Mammary epithelial cell (primary cell): ENCODE measurements at regions of chr21 and their contacts with region 1.

Region 1: DNA sequence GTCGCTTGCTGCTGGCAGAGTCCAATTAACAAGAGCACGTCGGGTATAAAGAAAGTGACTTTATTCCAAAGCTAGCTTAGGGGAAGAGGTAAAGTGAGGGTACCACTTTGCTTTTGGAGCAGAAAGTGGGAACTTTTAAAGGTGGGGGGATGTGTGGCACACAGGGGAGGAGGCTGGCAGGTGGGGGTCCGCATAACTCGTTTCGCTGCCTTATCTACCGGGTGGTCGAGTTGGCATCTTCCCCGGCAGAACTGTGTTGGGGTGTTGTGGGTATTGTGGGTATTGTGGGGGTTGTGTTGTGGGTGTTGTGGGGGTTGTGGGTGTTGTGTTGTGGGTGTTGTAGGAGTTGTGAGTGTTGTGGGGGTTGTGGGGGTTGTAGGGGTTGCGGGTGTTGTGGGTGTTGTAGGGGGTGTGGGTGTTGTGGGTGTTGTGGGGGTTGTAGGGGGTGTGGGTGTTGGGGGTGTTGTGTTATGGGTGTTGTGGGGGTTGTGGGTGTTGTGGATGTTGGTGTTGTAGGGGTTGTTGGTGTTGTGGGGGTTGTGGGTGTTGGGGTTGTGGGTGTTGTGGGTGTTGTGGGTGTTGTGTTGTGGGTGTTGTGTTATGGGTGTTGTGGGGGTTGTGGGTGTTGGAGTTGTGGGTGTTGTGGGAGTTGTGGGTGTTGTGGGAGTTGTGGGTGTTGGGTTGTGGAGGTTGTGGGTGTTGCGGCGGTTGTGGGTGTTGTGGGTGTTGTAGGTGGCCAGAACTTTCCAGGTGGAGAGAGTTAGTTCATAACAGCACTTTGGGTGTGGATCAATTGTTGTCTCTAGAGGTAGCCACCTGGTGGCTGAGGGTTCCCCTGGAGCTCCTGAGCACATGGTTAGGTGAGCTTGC is 52.7 kb downstream of the AGPAT3 start:
- DNase-seq: peak; percentile 26
- H3K4me3 ChIP-seq: peak overlapping the region in 2 of 3 experiments; percentile 43 to 48
- H3K27ac ChIP-seq: no peak overlapping the region
- H3K4me1 ChIP-seq: peaks cover 4% of the 10 kb centered on the region
- H3K27me3 ChIP-seq: no peaks in the 10 kb centered on the region
- CTCF ChIP-seq: peak in 1 of 2 donors; percentile 47

Region 2: DNA sequence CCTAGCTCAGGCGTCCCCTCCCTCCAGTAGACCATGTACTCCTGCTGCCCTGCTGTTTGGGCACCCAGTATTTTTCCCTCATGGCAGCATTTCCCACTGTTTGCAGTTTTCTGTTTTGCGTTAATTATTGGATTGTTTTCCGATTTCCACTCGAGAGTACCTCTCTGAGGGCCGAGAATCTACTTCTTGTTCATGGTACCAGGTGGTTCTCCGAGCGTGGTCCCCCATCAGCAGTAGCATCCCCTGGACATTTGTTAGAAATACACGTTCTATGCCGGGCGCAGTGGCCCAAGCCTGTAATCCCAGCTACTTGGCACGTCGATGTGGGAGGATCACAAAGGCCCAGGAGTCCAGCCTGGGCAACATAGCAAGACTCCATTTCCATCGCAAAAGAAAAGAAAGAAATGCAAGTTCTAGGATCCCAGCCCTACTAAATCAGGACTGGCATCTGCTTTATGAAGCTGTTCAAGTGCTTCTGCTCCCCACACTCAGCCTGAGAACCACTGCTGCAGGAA is 127.7 kb before region 1 on chr21:
- CTCF ChIA-PET with region 1: no interaction called
- dilution Hi-C with region 1: no loop called
- in situ Hi-C with region 1: no loop called
- intact Hi-C with region 1: no loop called
- DNase-seq: no peak
- H3K4me3 ChIP-seq: peak overlapping the region; percentile 56 to 100 (median 87)
- H3K27ac ChIP-seq: peak overlapping the region; percentile 41
- H3K4me1 ChIP-seq: peaks cover 8% of the 10 kb centered on the region
- H3K27me3 ChIP-seq: no peaks in the 10 kb centered on the region
- CTCF ChIP-seq: no peak

Region 3: DNA sequence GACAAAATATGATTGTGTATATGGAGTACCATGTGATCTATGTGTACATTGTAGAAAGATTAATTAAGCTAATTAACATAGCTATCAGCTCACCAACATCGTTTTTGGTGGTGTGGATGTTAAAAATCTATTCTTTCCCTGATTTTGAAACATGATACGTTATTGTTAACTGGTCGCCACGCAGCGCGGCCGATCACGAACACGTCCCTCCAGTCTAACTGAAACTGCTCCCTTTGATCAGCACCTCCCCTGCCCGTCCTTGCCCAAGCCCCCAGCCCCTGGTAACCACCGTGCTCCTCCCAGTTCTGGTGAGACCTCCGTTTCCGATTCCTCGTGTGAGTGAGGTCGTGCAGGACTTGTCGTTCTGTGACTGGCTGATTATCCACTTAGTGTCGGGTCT is 14.3 kb after region 1 on chr21:
- CTCF ChIA-PET with region 1: interaction called, 11 read pairs
- dilution Hi-C with region 1: no loop called
- in situ Hi-C with region 1: no loop called
- intact Hi-C with region 1: no loop called
- DNase-seq: no peak
- H3K4me3 ChIP-seq: no peak overlapping the region
- H3K27ac ChIP-seq: no peak overlapping the region
- H3K4me1 ChIP-seq: no peaks in the 10 kb centered on the region
- H3K27me3 ChIP-seq: no peaks in the 10 kb centered on the region
- CTCF ChIP-seq: no peak

Region 4: DNA sequence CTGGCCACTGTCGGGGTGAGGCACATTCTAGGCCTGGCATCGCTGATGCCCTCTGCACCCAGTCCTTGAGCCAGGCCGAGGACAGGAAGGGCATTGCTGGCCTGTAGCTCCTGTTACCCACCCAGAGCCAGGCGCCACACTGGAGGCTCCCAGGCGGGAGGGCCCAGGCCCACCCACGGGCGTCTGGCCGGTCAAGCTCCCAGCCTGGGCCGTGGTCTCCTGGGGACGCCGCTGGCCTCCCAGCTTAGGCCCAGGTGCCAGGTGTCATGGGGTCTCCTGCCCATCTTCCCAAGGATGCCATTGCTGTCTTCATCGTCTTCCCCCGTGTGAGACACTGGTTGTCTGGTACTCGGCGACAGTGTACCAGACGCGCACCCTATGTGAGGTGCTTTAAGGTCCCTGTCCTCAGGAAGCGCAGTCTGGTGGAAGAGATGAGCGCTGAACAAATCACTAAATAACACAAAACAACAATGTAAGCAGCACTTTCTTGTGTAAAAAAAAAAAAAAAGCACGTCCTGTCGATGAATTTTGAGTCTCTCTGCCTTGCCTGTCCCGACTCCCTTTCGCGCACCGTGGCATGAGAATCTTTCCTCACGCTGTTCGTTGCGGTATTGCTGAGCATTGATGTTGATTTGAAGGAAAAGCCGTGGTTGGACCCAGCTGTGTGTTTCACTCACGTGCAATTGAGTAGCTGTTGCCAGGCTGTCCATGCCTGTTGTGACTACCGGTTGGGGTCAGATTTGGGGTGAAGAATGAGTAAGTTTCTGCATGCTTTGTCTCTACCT is 67.3 kb after region 1 on chr21:
- CTCF ChIA-PET with region 1: no interaction called
- dilution Hi-C with region 1: no loop called
- in situ Hi-C with region 1: no loop called
- intact Hi-C with region 1: no loop called
- DNase-seq: no peak
- H3K4me3 ChIP-seq: no peak overlapping the region
- H3K27ac ChIP-seq: no peak overlapping the region
- H3K4me1 ChIP-seq: no peaks in the 10 kb centered on the region
- H3K27me3 ChIP-seq: no peaks in the 10 kb centered on the region
- CTCF ChIP-seq: no peak